PC-9 (cell line): ENCODE measurements at regions of chr12 and their contacts with region 1.

Region 1: DNA sequence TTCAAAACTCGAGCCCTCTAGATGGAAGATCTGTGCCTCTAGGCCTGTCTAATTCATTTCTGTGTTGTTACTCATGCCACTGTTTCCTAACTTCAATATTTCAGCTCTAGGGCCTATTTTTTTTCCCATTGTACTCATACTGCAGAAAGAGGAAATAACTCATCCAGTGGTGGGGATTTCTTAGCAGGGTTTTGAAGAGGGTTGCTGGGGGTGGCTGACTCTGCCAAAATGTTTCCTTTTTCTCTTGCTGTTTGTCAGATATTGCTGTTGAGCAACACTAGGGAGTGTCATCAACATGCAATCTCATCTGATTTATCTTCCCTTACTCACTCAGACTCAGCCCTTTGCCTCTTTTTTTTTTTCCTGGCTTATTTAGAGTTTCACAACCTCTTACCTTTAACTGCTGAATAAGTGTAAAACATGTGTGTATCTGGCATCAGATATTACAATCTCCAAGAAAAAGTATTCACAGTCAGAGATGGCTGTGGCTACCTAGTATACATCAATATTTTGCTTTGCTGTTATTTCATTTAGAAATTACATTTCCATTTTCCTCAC is 189.5 kb downstream of the DUSP6 start:
- DNase-seq: peak; percentile 58 to 97
- H3K4me3 ChIP-seq: no peak overlapping the region
- H3K27ac ChIP-seq: peak overlapping the region; percentile 92
- H3K4me1 ChIP-seq: peaks cover 71% of the 10 kb centered on the region
- H3K27me3 ChIP-seq: no peaks in the 10 kb centered on the region
- CTCF ChIP-seq: no peak

Region 2: GRCh38 chr12:89051065-89051677 is 111.6 kb before region 1 on chr12:
- CTCF ChIA-PET with region 1: no interaction called
- POLR2A ChIA-PET with region 1: no interaction called
- intact Hi-C with region 1: loop called (anchors 10 kb)
- DNase-seq: peak; percentile 18 to 53
- H3K4me3 ChIP-seq: no peak overlapping the region
- H3K27ac ChIP-seq: no peak overlapping the region
- H3K4me1 ChIP-seq: no peaks in the 10 kb centered on the region
- H3K27me3 ChIP-seq: no peaks in the 10 kb centered on the region
- CTCF ChIP-seq: peak; percentile 97

Region 3: GRCh38 chr12:89073027-89073398 is 89.8 kb before region 1 on chr12:
- CTCF ChIA-PET with region 1: no interaction called
- POLR2A ChIA-PET with region 1: no interaction called
- intact Hi-C with region 1: no loop called
- DNase-seq: no peak
- H3K4me3 ChIP-seq: no peak overlapping the region
- H3K27ac ChIP-seq: no peak overlapping the region
- H3K4me1 ChIP-seq: peaks cover 7% of the 10 kb centered on the region; the same call in 1 of the 2 replicates
- H3K27me3 ChIP-seq: no peaks in the 10 kb centered on the region
- CTCF ChIP-seq: no peak

Region 4: GRCh38 chr12:89117448-89118034 is 45.2 kb before region 1 on chr12:
- CTCF ChIA-PET with region 1: no interaction called
- POLR2A ChIA-PET with region 1: no interaction called
- intact Hi-C with region 1: loop called (anchors 5 kb)
- DNase-seq: peak; percentile 84 to 95
- H3K4me3 ChIP-seq: no peak overlapping the region
- H3K27ac ChIP-seq: peak overlapping the region; percentile 79
- H3K4me1 ChIP-seq: peaks cover 29% of the 10 kb centered on the region
- H3K27me3 ChIP-seq: no peaks in the 10 kb centered on the region
- CTCF ChIP-seq: no peak

Region 5: GRCh38 chr12:89345830-89346740 is 183.3 kb after region 1 on chr12:
- CTCF ChIA-PET with region 1: no interaction called
- POLR2A ChIA-PET with region 1: no interaction called
- intact Hi-C with region 1: no loop called
- DNase-seq: peak in 1 of 2 experiments; percentile 67
- H3K4me3 ChIP-seq: peak overlapping the region; percentile 77; the same call in 1 of the 2 replicates
- H3K27ac ChIP-seq: peak overlapping the region; percentile 46
- H3K4me1 ChIP-seq: peaks cover 38% of the 10 kb centered on the region
- H3K27me3 ChIP-seq: no peaks in the 10 kb centered on the region
- CTCF ChIP-seq: no peak

Region 6: GRCh38 chr12:89461649-89462612 is 299.1 kb after region 1 on chr12:
- CTCF ChIA-PET with region 1: interaction called, 14 read pairs
- POLR2A ChIA-PET with region 1: no interaction called
- intact Hi-C with region 1: no loop called
- DNase-seq: peak in 1 of 2 experiments; percentile 66
- H3K4me3 ChIP-seq: peak overlapping the region; percentile 28; the same call in 1 of the 2 replicates
- H3K27ac ChIP-seq: peak overlapping the region; percentile 17; the same call in 1 of the 2 replicates
- H3K4me1 ChIP-seq: peaks cover 4% of the 10 kb centered on the region
- H3K27me3 ChIP-seq: no peaks in the 10 kb centered on the region
- CTCF ChIP-seq: peak; percentile 77